ENCODE measurements at regions of chr6 and their contacts with region 1.

Region 1: DNA sequence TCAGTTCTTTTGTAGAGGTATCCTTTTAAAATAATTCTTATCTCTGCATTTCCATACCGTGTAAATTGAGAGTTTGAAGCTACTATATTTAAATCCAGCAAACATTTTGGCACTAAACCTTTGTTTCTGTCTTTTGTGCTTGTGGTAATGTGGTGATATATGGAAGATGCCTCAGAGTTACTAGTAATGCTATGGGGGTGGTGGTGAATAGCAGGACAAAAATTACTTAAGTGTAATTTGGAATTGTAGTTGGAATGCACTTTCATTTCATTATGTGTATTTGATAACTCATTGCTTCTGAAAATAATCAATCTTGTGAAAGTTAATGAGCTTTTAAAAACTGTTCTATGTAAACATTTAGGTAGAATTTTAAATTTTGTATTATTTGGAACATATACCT is 404.5 kb downstream of the PHF3 start:
- DNase-seq: no peak
- ATAC-seq: no peak
- H3K4me3 ChIP-seq: no peak overlapping the region
- H3K27ac ChIP-seq: no peak overlapping the region
- H3K4me1 ChIP-seq: no peaks in the 10 kb centered on the region
- H3K27me3 ChIP-seq: no peaks in the 10 kb centered on the region
- CTCF ChIP-seq: no peak
- EP300 ChIP-seq: no peak
- POLR2A ChIP-seq: no peak
- RAD21 ChIP-seq: no peak

Region 2: GRCh38 chr6:64062960-64063683 is 23.0 kb after region 1 on chr6:
- CTCF ChIA-PET with region 1: no interaction called
- POLR2A ChIA-PET with region 1: no interaction called
- RAD21 ChIA-PET with region 1: no interaction called
- SMC1A ChIA-PET with region 1: no interaction called
- in situ Hi-C with region 1: no loop called
- intact Hi-C with region 1: no loop called
- DNase-seq: no peak
- ATAC-seq: peak; percentile 56
- H3K4me3 ChIP-seq: no peak overlapping the region
- H3K27ac ChIP-seq: no peak overlapping the region
- H3K4me1 ChIP-seq: no peaks in the 10 kb centered on the region
- H3K27me3 ChIP-seq: no peaks in the 10 kb centered on the region
- CTCF ChIP-seq: no peak
- EP300 ChIP-seq: no peak
- POLR2A ChIP-seq: no peak
- RAD21 ChIP-seq: no peak

Region 3: DNA sequence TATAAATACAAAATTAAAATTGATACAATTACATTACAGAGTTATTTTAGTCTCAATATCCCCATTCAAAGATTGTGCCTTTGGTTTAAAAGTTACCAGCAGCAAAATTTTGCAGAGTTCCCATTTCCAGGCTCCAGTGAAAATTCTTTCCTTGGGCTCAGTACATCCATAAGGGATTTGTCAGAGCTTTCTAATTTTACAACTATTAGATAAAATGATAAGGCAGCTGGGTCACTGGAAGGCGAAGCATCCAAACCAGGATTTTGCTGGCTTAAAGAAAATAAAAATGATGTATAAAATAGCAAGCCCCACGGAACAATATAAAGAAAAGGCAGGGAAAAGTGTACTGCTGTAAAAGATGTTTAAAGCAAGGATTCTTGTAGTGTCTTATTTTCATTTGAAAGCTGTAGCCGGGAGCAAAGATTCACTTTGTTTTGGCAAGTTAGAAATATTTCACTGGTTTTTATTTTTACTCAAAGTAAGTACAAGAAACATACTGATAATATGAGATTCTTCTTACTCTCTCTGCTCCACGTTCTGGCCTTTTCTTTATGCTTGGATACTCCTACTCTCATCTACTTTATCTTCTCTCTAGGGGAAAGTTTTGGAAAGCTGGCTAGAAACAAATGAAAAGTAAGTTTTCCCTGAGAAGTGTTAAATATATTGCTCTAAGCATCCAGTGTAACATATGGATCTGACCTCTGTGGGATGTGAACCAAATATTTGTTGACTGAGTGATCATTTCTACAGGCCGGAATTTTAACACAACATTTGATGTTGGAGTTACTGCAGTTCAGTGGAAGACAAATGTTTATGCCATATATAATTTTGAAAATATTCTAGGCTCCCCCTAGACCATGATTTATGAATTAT is 83.9 kb after region 1 on chr6:
- CTCF ChIA-PET with region 1: no interaction called
- POLR2A ChIA-PET with region 1: no interaction called
- RAD21 ChIA-PET with region 1: no interaction called
- SMC1A ChIA-PET with region 1: no interaction called
- in situ Hi-C with region 1: no loop called
- intact Hi-C with region 1: loop called (anchors 5 kb)
- DNase-seq: no peak
- ATAC-seq: no peak
- H3K4me3 ChIP-seq: no peak overlapping the region
- H3K27ac ChIP-seq: no peak overlapping the region
- H3K4me1 ChIP-seq: no peaks in the 10 kb centered on the region
- H3K27me3 ChIP-seq: no peaks in the 10 kb centered on the region
- CTCF ChIP-seq: no peak
- EP300 ChIP-seq: no peak
- POLR2A ChIP-seq: no peak
- RAD21 ChIP-seq: no peak